Activated CD4-positive, alpha-beta memory T cell treated with anti-CD3 and anti-CD28 coated beads, Interleukin-2, amount 10 ng/mL, durations not matched to agents 7 days and 5 days (primary cell): ENCODE measurements at regions of chr1 and their contacts with region 1.

Region 1: DNA sequence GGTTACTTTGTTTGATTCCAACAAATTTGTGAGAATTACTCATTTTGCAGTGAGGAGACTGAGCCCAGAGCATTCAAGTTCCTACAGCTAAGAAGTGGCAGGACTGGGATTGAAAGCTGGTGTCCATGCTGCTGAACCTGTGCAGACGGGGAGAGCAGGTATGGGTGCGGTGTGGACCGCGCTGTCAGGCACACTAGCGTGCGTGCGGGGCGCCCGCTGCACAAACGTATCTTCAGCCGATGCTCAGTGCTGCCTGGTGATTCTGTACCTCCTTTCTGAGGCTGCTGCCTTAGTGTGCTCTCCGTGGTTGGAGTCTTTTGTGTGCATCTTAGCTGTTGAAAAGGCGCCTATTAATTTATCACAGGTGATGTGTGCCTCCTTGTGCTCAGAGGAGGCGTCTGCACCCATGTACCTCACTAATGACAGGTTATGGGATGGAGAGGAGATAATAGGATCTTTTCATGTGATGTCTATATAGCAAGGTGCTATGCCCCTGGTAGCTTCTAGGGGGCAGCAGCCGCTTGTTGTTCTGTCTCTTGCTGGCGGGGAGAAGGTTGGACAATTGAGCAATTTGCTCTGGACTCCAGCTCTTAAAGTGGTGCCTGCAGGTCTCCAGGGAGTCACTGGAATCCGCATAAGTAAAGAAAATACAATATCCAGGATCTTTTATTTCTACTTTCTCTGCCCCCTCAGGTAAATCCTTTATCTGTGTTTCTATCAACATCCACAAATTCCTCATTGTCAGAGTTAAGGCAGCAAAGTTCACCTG is 32.5 kb downstream of the PEX14 start:
- DNase-seq: peak; percentile 69
- H3K4me3 Mint-ChIP-seq: no peak overlapping the region
- H3K27ac Mint-ChIP-seq: peak overlapping the region; percentile 48
- H3K4me1 Mint-ChIP-seq: peaks cover 49% of the 10 kb centered on the region
- H3K27me3 Mint-ChIP-seq: no peaks in the 10 kb centered on the region

Region 2: GRCh38 chr1:10484521-10484920 is 22.8 kb before region 1 on chr1:
- CTCF ChIA-PET with region 1: no interaction called
- POLR2A ChIA-PET with region 1: no interaction called
- DNase-seq: no peak
- H3K4me3 Mint-ChIP-seq: no peak overlapping the region
- H3K27ac Mint-ChIP-seq: no peak overlapping the region
- H3K4me1 Mint-ChIP-seq: peaks cover 3% of the 10 kb centered on the region
- H3K27me3 Mint-ChIP-seq: no peaks in the 10 kb centered on the region

Region 3: DNA sequence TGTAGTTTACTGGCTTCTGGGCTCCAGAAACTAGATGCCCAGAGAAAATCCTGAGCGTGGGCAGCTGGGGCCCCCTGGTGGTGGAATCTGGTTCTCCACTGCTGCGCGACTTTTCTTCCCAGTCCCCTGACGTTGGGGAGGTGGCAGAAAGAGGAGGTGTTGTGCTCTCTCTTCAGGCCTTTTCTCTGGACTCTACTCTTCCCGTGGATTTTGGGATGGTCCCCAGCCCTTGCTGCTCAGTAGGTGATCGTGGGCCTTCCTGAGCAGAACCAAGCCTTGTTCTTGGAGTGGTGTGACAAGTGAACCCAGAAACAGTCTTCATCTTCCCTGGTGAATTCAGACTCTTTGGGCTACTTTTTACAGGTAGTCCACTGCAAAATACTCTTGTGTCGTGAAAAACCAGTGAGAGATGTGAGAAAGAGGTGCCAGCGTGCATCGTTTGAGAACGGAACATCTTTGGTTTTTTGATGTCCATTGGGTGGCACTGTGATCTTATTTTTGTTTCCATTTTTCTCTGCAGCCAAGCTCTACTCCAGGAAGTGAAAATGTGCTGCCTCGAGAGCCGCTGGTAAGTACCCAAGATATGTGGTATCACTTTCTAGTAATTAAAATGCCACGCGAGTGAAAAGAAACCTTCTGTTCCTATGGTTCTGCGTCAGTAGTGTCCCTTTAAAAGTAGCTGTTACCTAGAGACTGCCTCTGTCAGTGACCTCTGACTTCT is 12.4 kb before region 1 on chr1:
- CTCF ChIA-PET with region 1: interaction called, 153 read pairs
- POLR2A ChIA-PET with region 1: interaction called, 49 read pairs
- DNase-seq: peak; percentile 85
- H3K4me3 Mint-ChIP-seq: peak overlapping the region; percentile 75
- H3K27ac Mint-ChIP-seq: peak overlapping the region; percentile 87
- H3K4me1 Mint-ChIP-seq: peaks cover 52% of the 10 kb centered on the region
- H3K27me3 Mint-ChIP-seq: no peaks in the 10 kb centered on the region

Region 4: GRCh38 chr1:10537082-10537766 is 29.9 kb after region 1 on chr1:
- CTCF ChIA-PET with region 1: interaction called, 10 read pairs
- POLR2A ChIA-PET with region 1: interaction called, 3 read pairs
- DNase-seq: no peak
- H3K4me3 Mint-ChIP-seq: no peak overlapping the region
- H3K27ac Mint-ChIP-seq: no peak overlapping the region
- H3K4me1 Mint-ChIP-seq: peaks cover 19% of the 10 kb centered on the region
- H3K27me3 Mint-ChIP-seq: no peaks in the 10 kb centered on the region

Region 5: GRCh38 chr1:10867138-10867721 is 359.9 kb after region 1 on chr1:
- CTCF ChIA-PET with region 1: interaction called, 11 read pairs
- POLR2A ChIA-PET with region 1: no interaction called
- DNase-seq: peak; percentile 62
- H3K4me3 Mint-ChIP-seq: no peak overlapping the region
- H3K27ac Mint-ChIP-seq: no peak overlapping the region
- H3K4me1 Mint-ChIP-seq: peaks cover 6% of the 10 kb centered on the region
- H3K27me3 Mint-ChIP-seq: peaks cover 62% of the 10 kb centered on the region

Region 6: GRCh38 chr1:11012250-11013171 is 505.2 kb after region 1 on chr1 and contains the start of gene TARDBP:
- CTCF ChIA-PET with region 1: no interaction called
- POLR2A ChIA-PET with region 1: interaction called, 16 read pairs
- DNase-seq: peak; percentile 91
- H3K4me3 Mint-ChIP-seq: peak within 1 kb of the TSS; percentile 92
- H3K27ac Mint-ChIP-seq: peak within 1 kb of the TSS; percentile 85
- H3K4me1 Mint-ChIP-seq: peaks cover 30% of the 10 kb centered on the region
- H3K27me3 Mint-ChIP-seq: no peaks in the 10 kb centered on the region
- total RNA-seq, gene TARDBP: 159 to 174 TPM